PC-3 (cell line): ENCODE measurements at regions of chr2 and their contacts with region 1.

Region 1: GRCh38 chr2:205337274-205337673 is 345.0 kb upstream of the NRP2 start:
- DNase-seq: no peak
- ATAC-seq: no peak
- H3K4me3 ChIP-seq: no peak overlapping the region
- H3K27ac ChIP-seq: no peak overlapping the region
- H3K4me1 ChIP-seq: no peaks in the 10 kb centered on the region
- H3K27me3 ChIP-seq: no peaks in the 10 kb centered on the region
- CTCF ChIP-seq: no peak

Region 2: GRCh38 chr2:205107810-205108209 is 229.5 kb before region 1 on chr2:
- CTCF ChIA-PET with region 1: no interaction called
- POLR2A ChIA-PET with region 1: no interaction called
- intact Hi-C with region 1: no loop called
- DNase-seq: no peak
- ATAC-seq: no peak
- H3K4me3 ChIP-seq: no peak overlapping the region
- H3K27ac ChIP-seq: no peak overlapping the region
- H3K4me1 ChIP-seq: no peaks in the 10 kb centered on the region
- H3K27me3 ChIP-seq: no peaks in the 10 kb centered on the region
- CTCF ChIP-seq: no peak

Region 3: DNA sequence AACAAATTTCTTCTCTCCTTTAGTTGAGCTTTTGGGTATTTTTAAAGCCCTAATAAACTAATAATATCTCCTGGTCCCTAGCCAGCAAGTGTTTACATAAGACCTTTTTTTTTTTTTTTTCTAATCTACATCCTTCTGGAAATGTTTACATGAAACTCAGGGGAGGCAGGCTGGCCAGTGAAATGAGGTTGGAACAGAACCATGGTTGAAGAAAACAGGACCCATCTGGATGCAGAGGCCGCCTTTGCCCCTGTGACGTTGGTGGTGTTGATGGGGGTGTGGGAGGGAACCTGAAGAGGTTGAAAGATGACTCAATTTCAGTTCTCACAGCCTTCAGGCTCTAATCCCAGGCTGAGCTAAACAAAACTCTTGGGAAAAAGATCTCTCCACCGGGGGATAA is 463.5 kb after region 1 on chr2:
- CTCF ChIA-PET with region 1: no interaction called
- POLR2A ChIA-PET with region 1: no interaction called
- intact Hi-C with region 1: no loop called
- DNase-seq: no peak
- ATAC-seq: no peak
- H3K4me3 ChIP-seq: no peak overlapping the region
- H3K27ac ChIP-seq: no peak overlapping the region
- H3K4me1 ChIP-seq: no peaks in the 10 kb centered on the region
- H3K27me3 ChIP-seq: no peaks in the 10 kb centered on the region
- CTCF ChIP-seq: no peak

Region 4: GRCh38 chr2:205849136-205849535 is 511.9 kb after region 1 on chr2:
- CTCF ChIA-PET with region 1: no interaction called
- POLR2A ChIA-PET with region 1: interaction called, 13 read pairs
- intact Hi-C with region 1: no loop called
- DNase-seq: no peak
- ATAC-seq: no peak
- H3K4me3 ChIP-seq: no peak overlapping the region
- H3K27ac ChIP-seq: no peak overlapping the region
- H3K4me1 ChIP-seq: no peaks in the 10 kb centered on the region
- H3K27me3 ChIP-seq: peaks cover 41% of the 10 kb centered on the region
- CTCF ChIP-seq: no peak